ENCODE measurements at regions of chr18 and their contacts with region 1.

Region 1: DNA sequence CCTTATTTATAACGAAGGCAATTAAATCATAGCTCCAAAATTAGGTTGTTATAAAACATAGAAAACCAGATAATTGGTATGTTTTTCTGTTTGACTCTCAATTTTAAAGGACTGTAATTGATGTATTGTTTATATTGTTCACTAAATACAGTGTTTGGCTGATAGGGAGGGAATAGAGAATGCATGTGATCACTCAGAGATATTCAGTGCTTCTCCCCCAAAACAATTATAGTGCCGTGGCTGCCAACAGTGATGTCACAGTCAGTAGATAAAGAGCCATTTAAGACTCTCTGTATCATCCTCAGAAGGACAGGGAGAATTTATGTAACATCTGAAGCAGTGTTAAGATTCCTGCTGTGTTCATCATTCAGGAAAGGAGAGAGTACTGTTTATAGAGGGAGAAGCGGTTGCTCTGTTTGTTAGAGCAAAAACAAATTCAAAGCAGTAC is 69.6 kb downstream of the PHLPP1 start:
- DNase-seq: no peak
- ATAC-seq: peak; percentile 25
- H3K4me3 Mint-ChIP-seq: peak overlapping the region; percentile 28
- H3K27ac Mint-ChIP-seq: no peak overlapping the region
- H3K4me1 Mint-ChIP-seq: peaks cover 26% of the 10 kb centered on the region
- H3K27me3 Mint-ChIP-seq: no peaks in the 10 kb centered on the region
- CTCF ChIP-seq: no peak

Region 2: DNA sequence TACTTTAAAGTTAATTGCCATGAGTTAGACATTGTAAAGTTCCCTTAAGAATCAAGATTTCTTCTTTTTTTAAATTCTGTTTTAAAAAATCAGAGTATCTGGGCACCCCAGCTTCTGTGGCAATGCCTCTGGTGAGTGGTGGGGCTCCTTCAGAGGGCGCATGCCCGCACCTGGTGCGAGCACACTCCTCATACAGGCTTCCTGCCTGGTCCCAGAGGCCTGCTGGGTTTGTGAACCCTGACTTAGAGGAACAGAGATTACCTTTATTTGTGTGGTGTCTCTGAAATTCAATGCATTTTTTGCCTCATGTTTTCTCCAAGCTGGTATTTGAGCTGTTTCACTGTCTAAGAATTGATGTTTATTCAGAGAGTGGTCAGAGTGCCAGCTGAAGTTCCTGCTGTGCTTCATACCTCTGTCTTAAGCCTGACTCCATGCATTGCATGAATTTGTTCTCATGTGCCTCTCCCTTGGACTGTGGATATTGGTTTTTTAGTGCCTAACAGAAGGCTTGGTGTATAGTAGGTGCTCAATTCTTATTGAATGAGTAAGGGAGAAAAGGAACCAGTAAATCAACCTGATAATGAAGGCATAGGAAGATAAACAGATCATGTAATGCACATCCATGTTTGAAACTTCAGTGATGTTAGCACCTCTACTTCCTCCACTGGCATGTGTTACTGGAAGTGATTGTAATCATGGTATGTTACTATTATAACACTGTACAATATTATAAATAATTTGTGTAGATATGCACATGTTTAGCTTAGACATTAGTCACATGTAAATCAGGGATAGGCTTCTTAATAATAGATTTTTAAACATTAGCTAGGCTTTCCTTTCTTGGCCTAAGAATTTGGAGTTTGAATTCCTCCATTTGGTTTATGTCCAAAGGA is 40.7 kb before region 1 on chr18:
- CTCF ChIA-PET with region 1: no interaction called
- POLR2A ChIA-PET with region 1: no interaction called
- intact Hi-C with region 1: loop called (anchors 1 kb)
- DNase-seq: peak; percentile 18
- ATAC-seq: peak; percentile 99
- H3K4me3 Mint-ChIP-seq: peak overlapping the region; percentile 36
- H3K27ac Mint-ChIP-seq: peak overlapping the region; percentile 78
- H3K4me1 Mint-ChIP-seq: peaks cover 36% of the 10 kb centered on the region
- H3K27me3 Mint-ChIP-seq: no peaks in the 10 kb centered on the region
- CTCF ChIP-seq: no peak

Region 3: GRCh38 chr18:62771494-62772270 is 13.3 kb before region 1 on chr18:
- CTCF ChIA-PET with region 1: no interaction called
- POLR2A ChIA-PET with region 1: no interaction called
- intact Hi-C with region 1: loop called (anchors 2 kb)
- DNase-seq: no peak
- ATAC-seq: no peak
- H3K4me3 Mint-ChIP-seq: no peak overlapping the region
- H3K27ac Mint-ChIP-seq: no peak overlapping the region
- H3K4me1 Mint-ChIP-seq: peaks cover 31% of the 10 kb centered on the region
- H3K27me3 Mint-ChIP-seq: no peaks in the 10 kb centered on the region
- CTCF ChIP-seq: no peak

Region 4: DNA sequence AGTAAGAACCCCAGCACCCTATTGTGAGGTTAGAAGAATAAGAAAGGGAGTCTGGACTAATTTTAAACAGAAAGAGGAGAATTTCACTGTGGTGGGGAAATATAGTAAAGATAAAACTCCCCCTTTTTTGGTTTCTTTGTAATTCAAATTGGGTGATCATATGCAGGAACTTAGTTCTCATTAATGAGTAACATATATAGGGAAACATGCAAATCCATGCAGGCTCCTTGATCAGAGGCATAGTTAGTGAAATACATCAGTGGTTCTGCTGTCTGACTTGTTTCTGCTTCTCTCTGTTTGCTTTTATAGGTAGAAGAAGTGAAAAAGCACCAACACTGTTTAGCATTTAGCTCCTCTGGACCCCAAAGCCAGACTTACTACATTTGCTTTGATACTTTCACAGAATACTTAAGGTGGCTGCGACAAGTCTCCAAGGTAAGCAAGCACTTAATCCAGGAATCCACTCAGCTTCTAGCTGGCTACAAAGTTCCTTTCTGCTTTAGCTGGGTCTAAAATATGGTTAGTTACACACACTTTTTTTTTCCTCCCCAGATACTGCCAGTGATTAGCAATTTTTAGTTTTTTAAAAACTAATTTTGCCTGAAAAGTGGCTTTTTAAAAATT is 53.6 kb after region 1 on chr18:
- CTCF ChIA-PET with region 1: no interaction called
- POLR2A ChIA-PET with region 1: no interaction called
- intact Hi-C with region 1: loop called (anchors 2 kb)
- DNase-seq: no peak
- ATAC-seq: peak; percentile 73
- H3K4me3 Mint-ChIP-seq: peak overlapping the region; percentile 38
- H3K27ac Mint-ChIP-seq: peak overlapping the region; percentile 74
- H3K4me1 Mint-ChIP-seq: peaks cover 37% of the 10 kb centered on the region
- H3K27me3 Mint-ChIP-seq: no peaks in the 10 kb centered on the region
- CTCF ChIP-seq: no peak

Region 5: GRCh38 chr18:62863579-62864001 is 78.6 kb after region 1 on chr18:
- CTCF ChIA-PET with region 1: no interaction called
- POLR2A ChIA-PET with region 1: no interaction called
- intact Hi-C with region 1: no loop called
- DNase-seq: no peak
- ATAC-seq: no peak
- H3K4me3 Mint-ChIP-seq: no peak overlapping the region
- H3K27ac Mint-ChIP-seq: no peak overlapping the region
- H3K4me1 Mint-ChIP-seq: no peaks in the 10 kb centered on the region
- H3K27me3 Mint-ChIP-seq: no peaks in the 10 kb centered on the region
- CTCF ChIP-seq: no peak

Region 6: GRCh38 chr18:62904396-62905285 is 119.7 kb after region 1 on chr18:
- CTCF ChIA-PET with region 1: no interaction called
- POLR2A ChIA-PET with region 1: no interaction called
- intact Hi-C with region 1: no loop called
- DNase-seq: no peak
- ATAC-seq: no peak
- H3K4me3 Mint-ChIP-seq: no peak overlapping the region
- H3K27ac Mint-ChIP-seq: no peak overlapping the region
- H3K4me1 Mint-ChIP-seq: no peaks in the 10 kb centered on the region
- H3K27me3 Mint-ChIP-seq: no peaks in the 10 kb centered on the region
- CTCF ChIP-seq: no peak

Measured in activated B cell treated with CpG ODN at 0.5 μM for 24 hours (primary cell).